Ovary (tissue), 10 donors: ENCODE measurements at regions of chr21 and their contacts with region 1.

Region 1: GRCh38 chr21:39137248-39138178 is 45.7 kb downstream of the PSMG1 start:
- DNase-seq: peak in 4 of 5 donors; percentile 42 to 68 (median 54)
- H3K4me3 ChIP-seq: no peak overlapping the region
- H3K27ac ChIP-seq: peak overlapping the region; percentile 19 to 56
- H3K4me1 ChIP-seq: no peaks in the 10 kb centered on the region
- H3K27me3 ChIP-seq: no peaks in the 10 kb centered on the region
- CTCF ChIP-seq: no peak
- EP300 ChIP-seq: no peak
- POLR2A ChIP-seq: no peak

Region 2: DNA sequence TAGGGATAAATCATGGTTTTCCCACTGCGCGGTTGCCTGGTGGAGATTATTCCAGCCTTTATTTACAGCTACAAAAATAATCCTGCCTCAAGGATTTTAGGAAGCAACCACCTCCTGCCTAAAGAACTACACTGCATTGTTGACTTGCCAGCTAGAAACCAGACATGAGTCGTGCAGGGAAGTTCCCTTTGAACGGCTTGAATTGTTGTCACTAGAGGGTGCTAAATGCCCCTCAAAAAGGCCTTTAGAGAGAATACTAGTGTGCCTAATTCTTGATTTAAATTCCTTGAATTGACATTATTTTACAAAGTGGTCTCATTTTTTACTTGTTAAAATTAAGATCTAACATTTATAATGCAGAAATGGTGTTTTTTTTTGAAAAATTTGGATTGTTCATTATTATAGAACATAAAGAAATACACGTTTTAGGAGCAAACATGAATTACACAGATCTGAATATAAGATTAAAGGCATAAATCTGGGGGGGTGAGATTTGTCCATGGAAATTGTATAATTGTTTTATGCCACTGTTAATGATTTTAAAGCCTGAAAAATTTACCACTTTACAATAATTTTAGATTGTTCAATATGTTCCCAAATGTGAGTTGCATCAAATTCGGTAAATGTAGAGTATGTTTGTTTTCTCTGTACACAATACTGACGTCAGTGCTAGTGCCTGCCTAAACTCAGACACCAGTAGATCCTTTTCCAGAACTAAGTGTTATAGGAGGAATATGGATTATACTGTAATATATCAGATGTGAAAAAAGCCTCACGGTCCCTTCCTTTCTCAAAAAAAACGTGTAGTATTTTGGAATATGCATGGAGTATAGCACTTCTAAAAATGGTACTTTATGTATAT is 631.6 kb before region 1 on chr21:
- intact Hi-C with region 1: loop called in 3 of 4 experiments (anchors 5 to 10 kb)
- DNase-seq: peak in 2 of 5 donors; percentile 17 to 45
- H3K4me3 ChIP-seq: no peak overlapping the region
- H3K27ac ChIP-seq: no peak overlapping the region
- H3K4me1 ChIP-seq: no peaks in the 10 kb centered on the region
- H3K27me3 ChIP-seq: no peaks in the 10 kb centered on the region
- CTCF ChIP-seq: peak in 2 of 3 donors; percentile 24 to 43
- EP300 ChIP-seq: no peak
- POLR2A ChIP-seq: no peak

Region 3: DNA sequence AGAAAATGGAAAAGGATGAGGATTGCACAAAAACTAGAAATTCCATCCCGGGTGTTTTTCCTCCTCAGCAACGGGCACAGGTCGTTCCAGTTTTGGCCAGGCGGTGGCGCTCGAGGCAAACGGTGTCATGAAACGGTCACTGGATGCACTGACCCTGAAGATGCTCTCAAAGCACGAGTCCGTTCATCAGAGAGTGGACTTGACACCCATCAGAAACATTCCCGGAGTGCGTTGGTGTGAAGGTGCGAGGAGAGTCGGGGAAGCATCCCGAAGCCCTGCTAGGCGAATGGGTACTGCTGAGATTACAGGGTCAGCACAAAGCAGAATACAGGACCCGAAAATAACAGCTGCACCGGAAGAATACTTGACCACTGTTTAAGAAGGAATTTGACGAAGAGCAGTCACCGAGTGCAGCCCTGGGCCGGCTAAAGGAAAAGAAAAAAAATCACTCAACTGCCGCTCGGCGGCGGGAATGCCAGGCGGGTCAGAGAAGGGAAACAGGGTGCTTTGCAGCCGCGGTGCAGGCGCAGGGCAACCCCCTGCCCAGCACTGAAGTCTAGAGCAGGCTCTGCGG is 403.5 kb before region 1 on chr21:
- intact Hi-C with region 1: loop called (anchors 2 to 5 kb)
- DNase-seq: peak; percentile 84 to 95 (median 93)
- H3K4me3 ChIP-seq: peak overlapping the region; percentile 36
- H3K27ac ChIP-seq: peak overlapping the region; percentile 13 to 63
- H3K4me1 ChIP-seq: no peaks in the 10 kb centered on the region
- H3K27me3 ChIP-seq: no peaks in the 10 kb centered on the region
- CTCF ChIP-seq: peak; percentile 90 to 94 (median 92)
- EP300 ChIP-seq: no peak
- POLR2A ChIP-seq: no peak